AG04449 (cell line): ENCODE measurements at regions of chr4 and their contacts with region 1.

Region 1: DNA sequence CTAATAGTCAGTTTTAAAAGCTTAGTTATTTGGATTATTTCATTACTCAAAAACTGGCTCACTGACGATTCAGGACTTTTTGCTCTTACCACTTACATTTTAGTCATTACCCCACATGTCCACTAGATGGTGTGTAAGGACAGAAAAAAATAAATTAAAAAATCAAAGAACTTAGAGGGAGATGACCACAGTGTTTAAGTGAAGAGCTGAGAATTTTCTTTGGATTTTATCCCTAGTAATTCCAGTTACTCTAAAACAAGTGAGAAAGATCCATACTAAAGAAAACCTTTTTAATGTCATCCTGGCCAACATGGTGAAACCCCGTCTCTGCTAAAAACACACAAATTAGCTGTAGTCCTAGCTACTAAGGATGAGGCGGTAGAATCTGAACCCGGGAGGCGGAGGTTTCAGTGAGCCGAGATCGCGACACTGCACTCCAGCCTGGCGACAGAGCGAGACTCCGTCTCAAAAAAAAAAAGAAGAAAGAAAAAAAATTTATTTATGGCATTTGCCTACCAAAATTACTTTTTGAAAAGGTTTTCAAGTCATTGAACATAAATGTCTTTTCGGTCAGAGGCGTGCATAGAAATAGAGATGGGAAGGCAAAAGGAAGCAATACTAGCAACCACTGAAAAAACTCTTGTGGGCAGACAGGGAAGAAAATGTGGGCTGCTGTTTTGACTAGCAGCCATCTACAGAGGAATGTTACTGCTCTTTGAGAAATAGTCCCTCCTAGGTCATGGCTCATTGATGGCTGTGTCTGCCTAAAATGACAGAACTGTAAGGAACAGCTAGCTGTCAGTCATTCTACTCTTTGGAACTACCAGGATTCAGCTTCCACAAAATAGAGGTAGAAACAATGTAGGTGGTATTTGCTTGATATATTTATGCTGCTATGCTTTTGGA is 26.6 kb upstream of the TMPRSS11B start:
- DNase-seq: peak; percentile 45
- H3K4me3 ChIP-seq: peak overlapping the region; percentile 41
- CTCF ChIP-seq: peak; percentile 42

Region 2: DNA sequence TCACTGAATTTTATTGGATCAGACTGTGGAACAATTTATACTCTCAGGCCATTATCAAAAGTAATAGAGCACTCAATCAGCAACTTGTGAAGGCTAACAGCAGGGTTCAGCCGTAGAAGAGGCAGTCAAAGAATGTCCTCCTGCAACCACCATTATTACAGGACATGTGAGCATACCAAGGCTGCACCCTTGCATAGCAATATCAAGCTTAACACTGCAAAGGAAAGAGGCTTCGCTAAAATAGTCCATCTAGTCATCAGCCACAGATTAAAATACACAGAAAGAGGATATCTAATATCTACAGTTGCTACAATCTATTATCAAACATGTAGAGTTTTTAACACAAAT is 16.3 kb after region 1 on chr4:
- CTCF ChIA-PET with region 1: interaction called, 10 read pairs
- POLR2A ChIA-PET with region 1: no interaction called
- DNase-seq: no peak
- H3K4me3 ChIP-seq: no peak overlapping the region
- CTCF ChIP-seq: no peak

Region 3: GRCh38 chr4:68338608-68339007 is 66.5 kb after region 1 on chr4:
- CTCF ChIA-PET with region 1: interaction called, 10 read pairs
- POLR2A ChIA-PET with region 1: no interaction called
- DNase-seq: no peak
- H3K4me3 ChIP-seq: no peak overlapping the region
- CTCF ChIP-seq: no peak

Region 4: GRCh38 chr4:68368691-68369480 is 96.8 kb after region 1 on chr4:
- CTCF ChIA-PET with region 1: interaction called, 171 read pairs
- POLR2A ChIA-PET with region 1: no interaction called
- DNase-seq: peak; percentile 87
- H3K4me3 ChIP-seq: no peak overlapping the region
- CTCF ChIP-seq: no peak